Body of pancreas (tissue), 4 donors: ENCODE measurements at regions of chr10 and their contacts with region 1.

Region 1: DNA sequence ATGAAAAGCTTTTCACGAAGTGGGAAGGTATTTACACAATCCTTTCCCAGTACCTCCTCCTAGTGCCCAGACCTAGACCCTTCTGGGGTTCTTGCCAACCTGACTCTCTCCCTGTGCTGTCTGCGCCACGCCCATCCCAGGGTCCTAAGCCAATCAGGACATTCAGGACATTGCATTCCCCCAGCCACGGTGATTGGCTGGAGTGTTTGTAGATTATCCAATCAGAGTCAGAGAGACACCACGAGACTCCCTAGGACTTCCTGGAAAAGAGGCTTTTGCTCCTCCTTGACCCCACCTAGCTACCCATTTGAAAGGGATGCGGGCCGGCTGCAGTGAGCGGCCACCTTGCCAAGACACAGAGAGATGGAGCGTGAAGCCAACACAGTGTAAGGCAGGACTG is 3.5 kb upstream of the GDF2 start:
- DNase-seq: peak in 1 of 4 donors; percentile 8
- ATAC-seq: no peak
- H3K4me3 ChIP-seq: no peak overlapping the region
- H3K27ac ChIP-seq: no peak overlapping the region
- H3K4me1 ChIP-seq: peaks cover 20% of the 10 kb centered on the region
- H3K27me3 ChIP-seq: no peaks in the 10 kb centered on the region
- CTCF ChIP-seq: no peak
- POLR2A ChIP-seq: no peak

Region 2: DNA sequence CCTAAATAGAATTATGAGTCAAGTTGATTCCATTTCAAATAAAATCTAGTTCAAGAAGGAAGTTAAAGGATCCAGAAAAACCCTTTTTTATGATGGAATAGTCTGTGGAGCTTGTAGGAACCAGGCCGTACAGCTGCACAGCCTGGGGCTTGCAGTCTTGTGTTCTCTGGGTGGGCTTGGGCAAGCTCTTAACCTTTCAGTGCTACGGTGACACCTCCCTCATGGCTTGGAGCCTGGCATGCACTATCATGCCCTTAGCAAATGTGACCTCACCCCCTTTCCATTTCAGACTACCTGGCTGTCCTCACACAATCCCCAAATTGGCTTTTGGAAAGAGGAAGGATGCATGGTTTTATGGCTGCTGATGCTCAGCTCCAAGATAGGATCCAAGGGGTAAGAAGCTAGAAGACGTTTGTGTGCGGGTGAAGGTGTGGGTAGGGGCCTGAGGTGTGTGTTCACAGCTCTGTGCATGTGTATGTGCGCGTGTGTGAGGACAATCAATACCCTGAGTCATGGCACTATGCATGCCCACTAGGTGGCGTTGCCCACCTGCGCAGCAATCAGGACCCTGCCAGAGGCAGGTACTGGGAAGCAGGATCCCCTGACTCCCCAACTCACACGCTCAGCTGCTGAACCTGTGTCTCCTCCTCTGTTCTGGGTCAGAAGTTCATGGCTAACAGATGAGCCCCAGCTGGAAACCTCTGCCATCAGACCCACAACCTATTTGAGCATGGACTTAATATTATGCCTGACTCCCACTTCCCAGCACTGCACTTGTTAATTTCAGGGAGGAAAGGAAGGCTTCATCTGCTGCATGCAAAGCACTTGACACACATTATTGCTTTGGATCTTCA is 294.1 kb before region 1 on chr10:
- intact Hi-C with region 1: loop called (anchors 5 kb)
- DNase-seq: peak; percentile 78 to 84 (median 80)
- ATAC-seq: peak; percentile 85
- H3K4me3 ChIP-seq: no peak overlapping the region
- H3K27ac ChIP-seq: no peak overlapping the region
- H3K4me1 ChIP-seq: no peaks in the 10 kb centered on the region
- H3K27me3 ChIP-seq: no peaks in the 10 kb centered on the region
- CTCF ChIP-seq: peak; percentile 81 to 94 (median 90)
- POLR2A ChIP-seq: no peak

Region 3: GRCh38 chr10:47047671-47048525 is 270.8 kb before region 1 on chr10:
- intact Hi-C with region 1: loop called (anchors 5 kb)
- DNase-seq: peak; percentile 82 to 88 (median 85)
- ATAC-seq: peak; percentile 76
- H3K4me3 ChIP-seq: no peak overlapping the region
- H3K27ac ChIP-seq: no peak overlapping the region
- H3K4me1 ChIP-seq: peaks cover 5% of the 10 kb centered on the region
- H3K27me3 ChIP-seq: no peaks in the 10 kb centered on the region
- CTCF ChIP-seq: peak; percentile 83 to 90 (median 88)
- POLR2A ChIP-seq: no peak